Colonic mucosa (tissue), 4 donors: ENCODE measurements at regions of chr18 and their contacts with region 1.

Region 1: DNA sequence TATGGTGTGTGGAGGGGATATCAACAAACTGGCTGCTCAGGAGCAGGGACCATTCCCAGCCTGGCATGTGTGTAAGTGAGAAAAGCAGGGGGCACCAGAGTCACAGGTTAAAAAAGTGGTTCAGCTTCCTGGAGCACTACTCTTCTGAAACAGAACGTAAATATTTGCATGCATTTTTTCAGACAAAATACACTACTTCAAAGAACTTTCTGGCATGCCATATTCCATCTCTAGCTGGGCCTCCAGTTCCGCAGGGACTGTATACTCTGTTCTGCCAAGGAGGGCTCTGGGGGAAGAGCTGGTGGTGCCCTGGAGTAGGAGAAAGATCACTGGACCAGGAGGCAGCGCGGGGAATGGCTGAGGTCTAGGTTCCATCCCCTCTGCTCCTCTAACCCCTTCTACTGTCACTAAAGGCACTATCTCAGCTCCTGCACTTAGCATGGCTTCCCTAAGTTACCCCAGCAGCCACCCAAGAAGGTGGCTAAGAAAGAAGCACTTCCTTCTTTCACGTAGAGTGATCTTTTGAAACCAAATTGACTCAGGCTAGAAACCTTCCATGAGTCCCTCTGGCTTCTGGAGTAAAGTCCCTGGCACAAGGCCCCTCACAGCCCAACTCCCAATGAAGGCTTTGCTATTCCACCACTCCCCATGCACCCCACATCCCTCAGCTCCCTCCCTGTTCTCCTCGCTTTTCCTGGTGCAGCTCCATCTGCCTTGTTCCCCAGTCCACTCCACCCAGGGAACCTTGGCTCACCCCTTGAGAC is 57.6 kb upstream of the CABLES1 start:
- DNase-seq: no peak
- H3K4me3 ChIP-seq: no peak overlapping the region
- H3K27ac ChIP-seq: no peak overlapping the region
- H3K4me1 ChIP-seq: no peaks in the 10 kb centered on the region
- H3K27me3 ChIP-seq: no peaks in the 10 kb centered on the region
- CTCF ChIP-seq: peak; percentile 37

Region 2: GRCh38 chr18:23377669-23378301 is 300.1 kb after region 1 on chr18:
- intact Hi-C with region 1: loop called (anchors 5 kb)
- DNase-seq: no peak
- H3K4me3 ChIP-seq: no peak overlapping the region
- H3K27ac ChIP-seq: no peak overlapping the region
- H3K4me1 ChIP-seq: no peaks in the 10 kb centered on the region
- H3K27me3 ChIP-seq: no peaks in the 10 kb centered on the region
- CTCF ChIP-seq: no peak

Region 3: GRCh38 chr18:23412351-23412964 is 334.8 kb after region 1 on chr18:
- intact Hi-C with region 1: loop called (anchors 5 kb)
- DNase-seq: no peak
- H3K4me3 ChIP-seq: no peak overlapping the region
- H3K27ac ChIP-seq: no peak overlapping the region
- H3K4me1 ChIP-seq: no peaks in the 10 kb centered on the region
- H3K27me3 ChIP-seq: no peaks in the 10 kb centered on the region
- CTCF ChIP-seq: no peak